IMR-90 (cell line): ENCODE measurements at regions of chr6 and their contacts with region 1.

Region 1: GRCh38 chr6:155915651-155916050 is 460.0 kb upstream of the NOX3 start:
- DNase-seq: no peak
- ATAC-seq: no peak
- H3K4me3 ChIP-seq: no peak overlapping the region
- H3K27ac ChIP-seq: no peak overlapping the region
- H3K4me1 ChIP-seq: no peaks in the 10 kb centered on the region
- H3K27me3 ChIP-seq: no peaks in the 10 kb centered on the region
- CTCF ChIP-seq: no peak
- POLR2A ChIP-seq: no peak
- RAD21 ChIP-seq: no peak

Region 2: DNA sequence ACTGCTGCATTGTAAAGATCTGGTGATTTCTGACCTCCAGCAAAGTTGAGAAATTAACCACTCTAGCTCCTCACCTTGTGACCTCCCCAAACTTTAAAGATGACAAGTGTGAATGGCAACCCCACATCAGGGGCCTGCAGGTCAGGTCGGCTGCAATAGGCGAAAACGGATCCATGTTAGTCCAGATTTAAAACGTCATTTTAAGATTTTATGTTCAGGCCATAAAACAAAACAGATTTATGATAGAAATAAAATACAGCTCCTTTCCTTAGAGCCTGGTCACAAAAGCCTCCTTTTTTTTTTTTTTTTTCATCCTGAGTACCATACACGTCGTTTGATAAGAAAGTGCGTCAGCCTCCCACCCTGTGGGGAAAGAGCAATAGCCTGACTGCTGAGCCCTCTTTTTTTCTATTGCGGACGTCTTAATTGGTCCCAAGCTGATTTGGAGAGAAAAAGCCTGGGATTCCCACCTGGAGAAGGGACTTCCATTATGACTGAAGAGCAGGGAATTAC is 59.2 kb after region 1 on chr6:
- CTCF ChIA-PET with region 1: no interaction called
- POLR2A ChIA-PET with region 1: no interaction called
- dilution Hi-C with region 1: no loop called
- in situ Hi-C with region 1: no loop called
- intact Hi-C with region 1: loop called (anchors 2 kb)
- DNase-seq: no peak
- ATAC-seq: no peak
- H3K4me3 ChIP-seq: no peak overlapping the region
- H3K27ac ChIP-seq: no peak overlapping the region
- H3K4me1 ChIP-seq: no peaks in the 10 kb centered on the region
- H3K27me3 ChIP-seq: no peaks in the 10 kb centered on the region
- CTCF ChIP-seq: no peak
- POLR2A ChIP-seq: no peak
- RAD21 ChIP-seq: no peak

Region 3: DNA sequence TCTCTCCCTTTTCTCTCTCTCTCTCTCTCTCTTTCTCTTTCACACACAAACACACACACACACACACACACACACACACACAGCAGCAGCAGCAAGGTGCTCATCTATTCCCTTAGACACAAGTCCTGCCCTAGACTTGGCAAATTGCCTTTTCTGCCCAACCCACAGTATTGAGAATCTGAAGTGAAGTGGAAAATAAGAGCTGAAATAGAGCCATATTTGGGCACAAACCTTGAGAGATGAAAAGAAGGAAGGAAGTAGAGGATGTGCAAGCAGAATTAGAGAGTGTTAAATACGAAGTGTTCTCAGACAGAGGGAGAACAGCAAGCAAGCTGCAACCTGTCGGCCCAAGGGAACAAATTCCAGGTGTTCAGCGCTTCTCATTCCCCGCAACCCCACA is 97.5 kb after region 1 on chr6:
- CTCF ChIA-PET with region 1: no interaction called
- POLR2A ChIA-PET with region 1: no interaction called
- dilution Hi-C with region 1: no loop called
- in situ Hi-C with region 1: no loop called
- intact Hi-C with region 1: no loop called
- DNase-seq: no peak
- ATAC-seq: no peak
- H3K4me3 ChIP-seq: no peak overlapping the region
- H3K27ac ChIP-seq: no peak overlapping the region
- H3K4me1 ChIP-seq: peaks cover 14% of the 10 kb centered on the region
- H3K27me3 ChIP-seq: no peaks in the 10 kb centered on the region
- CTCF ChIP-seq: no peak
- POLR2A ChIP-seq: no peak
- RAD21 ChIP-seq: no peak